ENCODE measurements at regions of chr4 and their contacts with region 1.

Region 1: GRCh38 chr4:182938205-182938645 is 21.0 kb upstream of the DCTD start:
- DNase-seq: peak; percentile 32 to 65 (median 43)
- H3K4me3 ChIP-seq: no peak overlapping the region
- H3K4me3 Mint-ChIP-seq: no peak overlapping the region
- H3K27ac ChIP-seq: no peak overlapping the region
- H3K27ac Mint-ChIP-seq: peak overlapping the region in 1 of 8 donors; percentile 46
- H3K4me1 ChIP-seq: no peaks in the 10 kb centered on the region
- H3K4me1 Mint-ChIP-seq: peaks cover 0 to 3% (median 0%) of the 10 kb centered on the region in 3 donors
- H3K27me3 ChIP-seq: no peaks in the 10 kb centered on the region
- H3K27me3 Mint-ChIP-seq: peaks cover 0 to 22% of the 10 kb centered on the region in 2 donors

Region 2: DNA sequence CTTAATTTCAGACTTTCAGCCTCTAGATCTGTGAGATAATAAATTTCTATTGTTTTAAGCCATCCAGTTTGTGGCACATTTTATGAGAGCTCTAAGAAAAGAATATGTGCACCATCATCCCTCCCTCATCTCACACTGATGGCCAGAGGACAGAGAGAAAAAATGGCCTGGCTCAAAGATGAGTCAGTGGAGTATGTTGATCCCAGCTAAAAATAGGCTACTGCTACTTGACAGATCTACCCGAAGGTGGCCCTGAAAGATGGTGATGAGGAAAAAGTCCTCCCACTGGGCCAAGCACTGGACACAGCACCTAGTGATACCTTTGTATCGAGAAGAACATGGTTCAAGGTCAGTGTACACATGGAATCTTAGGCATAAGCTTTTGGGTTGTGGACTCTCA is 17.2 kb after region 1 on chr4:
- CTCF ChIA-PET with region 1: interaction called, 12 read pairs
- POLR2A ChIA-PET with region 1: no interaction called
- DNase-seq: no peak
- H3K4me3 ChIP-seq: no peak overlapping the region
- H3K4me3 Mint-ChIP-seq: no peak overlapping the region
- H3K27ac ChIP-seq: no peak overlapping the region
- H3K27ac Mint-ChIP-seq: no peak overlapping the region
- H3K4me1 ChIP-seq: no peaks in the 10 kb centered on the region
- H3K4me1 Mint-ChIP-seq: no peaks in the 10 kb centered on the region
- H3K27me3 ChIP-seq: no peaks in the 10 kb centered on the region
- H3K27me3 Mint-ChIP-seq: peaks cover 0 to 7% of the 10 kb centered on the region in 2 donors

Region 3: DNA sequence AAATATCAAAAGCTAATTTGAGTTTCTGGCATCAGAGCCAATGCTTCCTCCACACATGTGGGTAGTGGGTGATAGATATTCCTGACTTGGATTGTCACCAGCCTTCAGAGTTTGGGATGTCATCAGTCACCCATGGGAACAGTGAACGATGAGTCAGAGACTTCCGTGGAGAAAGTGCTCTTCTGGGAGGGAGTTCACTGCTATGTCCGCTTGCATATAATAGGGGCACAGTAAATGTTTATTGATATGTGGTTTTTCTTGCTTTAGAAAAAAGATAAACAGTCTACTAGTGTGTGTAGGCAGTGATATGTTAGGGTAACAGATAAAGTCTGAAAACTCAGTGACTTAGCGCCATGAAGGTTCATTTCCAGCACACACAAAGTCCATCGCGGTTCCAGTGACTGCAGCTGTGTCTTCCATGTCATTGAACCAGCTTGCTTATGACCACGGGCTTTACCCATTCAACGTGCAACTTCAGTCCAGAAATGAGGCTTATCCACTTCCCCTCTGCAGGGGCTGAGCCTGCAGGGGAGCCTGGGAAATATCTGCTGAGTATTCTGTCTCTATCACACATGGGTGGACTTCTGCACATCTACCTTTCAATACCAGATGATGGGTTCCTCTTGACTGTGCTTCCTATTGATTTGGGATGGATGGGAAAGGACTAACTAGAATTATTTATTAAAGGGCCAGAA is 73.1 kb after region 1 on chr4:
- CTCF ChIA-PET with region 1: no interaction called
- POLR2A ChIA-PET with region 1: no interaction called
- DNase-seq: no peak
- H3K4me3 ChIP-seq: no peak overlapping the region
- H3K4me3 Mint-ChIP-seq: no peak overlapping the region
- H3K27ac ChIP-seq: no peak overlapping the region
- H3K27ac Mint-ChIP-seq: no peak overlapping the region
- H3K4me1 ChIP-seq: no peaks in the 10 kb centered on the region
- H3K4me1 Mint-ChIP-seq: no peaks in the 10 kb centered on the region
- H3K27me3 ChIP-seq: no peaks in the 10 kb centered on the region
- H3K27me3 Mint-ChIP-seq: peaks cover 13 to 48% of the 10 kb centered on the region in 2 donors

Region 4: DNA sequence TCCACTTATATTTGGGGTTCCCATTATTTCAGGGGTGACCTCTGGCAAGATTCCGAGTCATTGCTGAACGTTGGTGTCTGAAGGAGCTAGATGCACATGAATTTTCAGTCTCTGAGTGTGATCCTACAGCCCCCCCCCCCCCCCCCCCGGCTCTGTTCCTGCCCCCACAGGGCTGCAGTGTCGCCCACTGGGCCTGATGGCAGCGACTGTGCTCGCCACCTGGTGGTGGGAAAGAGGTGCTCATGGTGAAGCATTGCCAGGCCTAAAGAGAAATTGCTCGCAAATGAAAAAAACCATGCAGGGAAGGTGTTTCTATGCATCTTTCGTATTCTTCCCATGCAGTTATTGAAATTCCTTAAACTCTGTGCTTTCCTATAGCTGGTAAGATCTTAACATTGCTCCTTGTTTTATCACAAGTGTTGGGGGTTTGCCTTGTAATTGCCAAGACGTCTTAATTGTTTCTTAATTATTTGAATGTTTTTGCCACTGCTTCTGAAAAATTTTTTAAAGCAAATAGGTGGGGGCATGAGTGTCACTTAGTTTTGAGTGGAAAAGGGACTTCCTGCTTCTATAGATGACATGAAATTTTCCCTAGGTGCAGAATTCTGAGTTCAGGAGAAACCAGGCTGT is 318.6 kb after region 1 on chr4:
- CTCF ChIA-PET with region 1: interaction called, 27 read pairs
- POLR2A ChIA-PET with region 1: no interaction called
- DNase-seq: peak; percentile 5 to 54 (median 15)
- H3K4me3 ChIP-seq: no peak overlapping the region
- H3K4me3 Mint-ChIP-seq: no peak overlapping the region
- H3K27ac ChIP-seq: no peak overlapping the region
- H3K27ac Mint-ChIP-seq: no peak overlapping the region
- H3K4me1 ChIP-seq: no peaks in the 10 kb centered on the region
- H3K4me1 Mint-ChIP-seq: peaks cover 0 to under 1% (median under 1%) of the 10 kb centered on the region in 3 donors
- H3K27me3 ChIP-seq: no peaks in the 10 kb centered on the region
- H3K27me3 Mint-ChIP-seq: peaks cover 5 to 24% of the 10 kb centered on the region in 2 donors

Region 5: GRCh38 chr4:183261953-183262775 is 323.9 kb after region 1 on chr4:
- CTCF ChIA-PET with region 1: interaction called, 27 read pairs
- POLR2A ChIA-PET with region 1: no interaction called
- DNase-seq: peak; percentile 33 to 65 (median 53)
- H3K4me3 ChIP-seq: no peak overlapping the region
- H3K4me3 Mint-ChIP-seq: no peak overlapping the region
- H3K27ac ChIP-seq: no peak overlapping the region
- H3K27ac Mint-ChIP-seq: peak overlapping the region in 6 of 8 donors; percentile 45 to 87 (median 76)
- H3K4me1 ChIP-seq: peaks cover 5% of the 10 kb centered on the region
- H3K4me1 Mint-ChIP-seq: peaks cover 5 to 7% (median 6%) of the 10 kb centered on the region in 3 donors
- H3K27me3 ChIP-seq: no peaks in the 10 kb centered on the region
- H3K27me3 Mint-ChIP-seq: peaks cover 5 to 35% of the 10 kb centered on the region in 2 donors